Activated CD4-positive, alpha-beta memory T cell treated with anti-CD3 and anti-CD28 coated beads for 36 hours (primary cell): ENCODE measurements at regions of chr22 and their contacts with region 1.

Region 1: DNA sequence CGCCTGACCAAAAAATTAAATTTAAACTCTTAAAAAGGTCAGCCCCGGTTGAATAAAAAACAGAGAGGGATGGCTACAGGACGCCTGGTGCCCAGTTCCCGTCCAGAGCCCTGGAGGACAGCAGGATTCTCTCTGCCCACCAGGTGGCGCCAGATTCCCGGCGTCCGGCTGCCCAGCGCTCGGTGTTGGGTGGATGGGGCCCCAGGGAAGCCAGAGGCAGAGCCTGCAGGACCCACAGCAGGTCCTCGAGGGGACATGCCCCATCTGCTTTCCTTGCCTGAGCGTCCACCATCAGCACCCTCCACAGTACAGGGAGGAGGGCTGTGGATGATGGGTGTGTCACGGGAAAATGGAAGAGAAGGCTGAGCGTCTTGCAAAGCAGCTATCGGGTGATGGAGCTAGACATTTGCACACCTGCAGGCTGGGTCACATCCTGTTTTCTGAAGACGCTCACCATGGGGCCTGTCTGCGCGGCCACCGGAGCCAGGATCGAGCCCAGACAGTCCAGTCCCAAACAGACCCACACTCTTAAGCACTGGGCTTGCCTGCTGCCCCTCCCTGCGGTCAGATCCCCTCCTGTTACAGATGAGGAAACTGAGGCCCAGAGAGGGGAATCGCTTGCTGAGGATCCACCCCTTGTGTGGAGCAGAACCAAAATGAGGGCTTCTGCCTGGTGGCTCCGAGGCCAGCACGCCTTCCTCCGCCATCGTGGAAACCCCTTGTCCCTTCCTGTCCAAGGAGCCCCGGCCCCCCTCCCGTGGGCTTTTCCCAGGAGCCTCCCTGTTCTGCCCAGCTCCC is 18.5 kb upstream of the CBX7 start:
- DNase-seq: peak; percentile 91
- H3K4me3 Mint-ChIP-seq: peak overlapping the region; percentile 37
- H3K27ac Mint-ChIP-seq: peak overlapping the region; percentile 43
- H3K4me1 Mint-ChIP-seq: peaks cover 40% of the 10 kb centered on the region
- H3K27me3 Mint-ChIP-seq: peaks cover 1% of the 10 kb centered on the region

Region 2: DNA sequence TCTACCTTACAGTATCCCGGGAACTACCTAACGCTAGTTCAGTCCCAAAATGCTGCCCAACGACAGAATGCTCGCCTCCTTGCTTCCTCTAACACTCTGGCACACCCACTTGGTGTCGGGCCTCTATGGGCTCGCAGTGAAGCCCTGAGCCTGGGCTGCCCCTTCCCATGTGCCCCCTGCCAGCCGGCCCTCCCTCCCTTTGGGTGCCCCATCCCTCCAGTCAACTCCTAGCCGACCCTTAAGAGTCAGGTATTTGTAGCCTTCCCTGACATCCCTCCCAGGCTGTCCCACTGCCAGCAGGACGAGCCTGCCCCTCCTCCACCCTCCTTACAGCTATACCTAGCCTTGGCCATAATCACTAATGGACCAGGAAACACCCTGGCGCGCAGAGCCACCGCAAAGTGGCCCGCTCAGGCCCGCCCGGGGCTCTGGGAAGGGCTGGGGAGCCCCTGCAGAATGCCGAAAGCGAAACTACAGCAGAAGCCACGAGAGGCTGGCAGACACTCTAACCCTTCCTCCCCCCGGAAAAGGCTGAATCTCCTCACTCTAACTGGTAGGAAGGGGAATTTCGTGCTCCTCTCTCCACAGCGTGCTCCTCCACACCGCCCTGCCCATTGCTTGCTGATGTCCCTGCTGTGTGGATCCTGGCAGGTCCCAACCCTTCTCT is 26.8 kb before region 1 on chr22:
- CTCF ChIA-PET with region 1: no interaction called
- POLR2A ChIA-PET with region 1: no interaction called
- intact Hi-C with region 1: no loop called
- DNase-seq: peak; percentile 73
- H3K4me3 Mint-ChIP-seq: peak overlapping the region; percentile 87
- H3K27ac Mint-ChIP-seq: peak overlapping the region; percentile 85
- H3K4me1 Mint-ChIP-seq: peaks cover 31% of the 10 kb centered on the region
- H3K27me3 Mint-ChIP-seq: no peaks in the 10 kb centered on the region

Region 3: GRCh38 chr22:39205338-39206021 is 34.5 kb after region 1 on chr22:
- CTCF ChIA-PET with region 1: interaction called, 3 read pairs
- POLR2A ChIA-PET with region 1: no interaction called
- intact Hi-C with region 1: loop called (anchors 5 kb)
- DNase-seq: peak; percentile 67
- H3K4me3 Mint-ChIP-seq: no peak overlapping the region
- H3K27ac Mint-ChIP-seq: peak overlapping the region; percentile 33
- H3K4me1 Mint-ChIP-seq: peaks cover 24% of the 10 kb centered on the region
- H3K27me3 Mint-ChIP-seq: peaks cover 4% of the 10 kb centered on the region

Region 4: GRCh38 chr22:39297490-39298193 is 126.6 kb after region 1 on chr22:
- CTCF ChIA-PET with region 1: interaction called, 22 read pairs
- POLR2A ChIA-PET with region 1: no interaction called
- intact Hi-C with region 1: no loop called
- DNase-seq: no peak
- H3K4me3 Mint-ChIP-seq: no peak overlapping the region
- H3K27ac Mint-ChIP-seq: no peak overlapping the region
- H3K4me1 Mint-ChIP-seq: peaks cover 6% of the 10 kb centered on the region
- H3K27me3 Mint-ChIP-seq: peaks cover 27% of the 10 kb centered on the region